ENCODE measurements at regions of chr2 and their contacts with region 1.

Region 1: DNA sequence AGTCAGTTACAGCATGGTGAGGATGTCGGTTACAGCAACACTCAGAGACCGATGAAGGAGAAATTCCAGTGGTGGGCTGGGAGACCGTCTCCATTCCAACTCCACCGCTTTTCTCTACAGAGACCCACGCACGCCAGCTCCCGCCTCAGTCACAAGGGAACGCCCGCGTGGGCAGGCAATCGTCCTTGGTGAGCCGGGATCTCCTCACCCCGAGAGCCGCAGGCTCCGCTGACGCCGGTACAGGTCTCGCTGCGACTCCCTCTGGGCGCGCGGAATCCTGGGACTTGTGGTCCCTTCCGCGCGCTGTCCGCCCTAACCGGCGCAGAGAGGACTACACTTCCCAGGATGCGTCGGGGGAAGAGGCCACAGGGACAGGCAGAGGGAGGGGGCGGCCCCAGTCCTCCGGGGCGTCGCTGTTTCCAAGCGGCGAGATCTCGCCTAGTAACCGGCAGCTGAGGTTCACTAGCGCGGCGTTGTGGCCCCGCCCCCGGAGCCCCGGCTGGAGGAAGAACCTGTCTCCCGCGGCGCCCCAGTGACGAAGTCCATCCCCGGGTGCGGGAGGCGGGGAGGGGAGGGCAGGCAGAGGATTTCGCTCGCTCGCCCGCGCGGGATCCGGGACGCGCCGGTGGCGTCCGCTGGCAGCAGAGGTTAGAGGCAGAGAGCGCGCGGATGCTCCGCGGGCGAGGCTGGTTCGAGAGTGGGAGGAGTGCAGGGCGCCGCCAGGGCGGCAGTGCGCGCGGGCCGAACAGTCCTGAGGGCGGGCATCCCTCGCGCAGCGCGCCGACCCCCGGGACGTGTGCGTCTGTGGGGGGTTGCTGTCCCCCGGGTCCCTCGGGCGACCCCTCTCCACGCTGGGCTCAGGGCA is at the start of gene EML6:
- DNase-seq: peak; percentile 95 to 99 (median 98)
- ATAC-seq: peak; percentile 95
- H3K4me3 ChIP-seq: peak within 1 kb of the TSS; percentile 70 to 72
- H3K4me3 Mint-ChIP-seq: peak within 1 kb of the TSS; percentile 93
- H3K27ac ChIP-seq: peak within 1 kb of the TSS; percentile 43 to 53
- H3K27ac Mint-ChIP-seq: peak within 1 kb of the TSS; percentile 69
- H3K4me1 ChIP-seq: peaks cover 12% of the 10 kb centered on the region
- H3K4me1 Mint-ChIP-seq: peaks cover 17% of the 10 kb centered on the region
- H3K27me3 ChIP-seq: peaks cover 0 to 11% of the 10 kb centered on the region in 2 experiments
- H3K27me3 Mint-ChIP-seq: peaks cover 27% of the 10 kb centered on the region
- CTCF ChIP-seq: no peak
- total RNA-seq, gene EML6: 0.35 to 0.81 TPM

Region 2: GRCh38 chr2:53028259-53028658 is 1695.1 kb before region 1 on chr2:
- CTCF ChIA-PET with region 1: no interaction called
- POLR2A ChIA-PET with region 1: no interaction called
- intact Hi-C with region 1: no loop called
- DNase-seq: no peak
- ATAC-seq: no peak
- H3K4me3 ChIP-seq: no peak overlapping the region
- H3K4me3 Mint-ChIP-seq: no peak overlapping the region
- H3K27ac ChIP-seq: no peak overlapping the region
- H3K27ac Mint-ChIP-seq: no peak overlapping the region
- H3K4me1 ChIP-seq: no peaks in the 10 kb centered on the region
- H3K4me1 Mint-ChIP-seq: no peaks in the 10 kb centered on the region
- H3K27me3 ChIP-seq: no peaks in the 10 kb centered on the region
- H3K27me3 Mint-ChIP-seq: no peaks in the 10 kb centered on the region
- CTCF ChIP-seq: no peak

Region 3: GRCh38 chr2:53767405-53768241 is 955.7 kb before region 1 on chr2 and contains the start of gene CHAC2:
- CTCF ChIA-PET with region 1: no interaction called
- POLR2A ChIA-PET with region 1: no interaction called
- intact Hi-C with region 1: loop called (anchors 1 to 5 kb)
- DNase-seq: peak; percentile 50 to 92 (median 84)
- ATAC-seq: peak; percentile 87
- H3K4me3 ChIP-seq: peak within 1 kb of the TSS; percentile 71 to 96
- H3K4me3 Mint-ChIP-seq: peak within 1 kb of the TSS; percentile 92
- H3K27ac ChIP-seq: peak within 1 kb of the TSS; percentile 70 to 86
- H3K27ac Mint-ChIP-seq: peak within 1 kb of the TSS; percentile 93
- H3K4me1 ChIP-seq: peaks cover 9% of the 10 kb centered on the region
- H3K4me1 Mint-ChIP-seq: peaks cover 29% of the 10 kb centered on the region
- H3K27me3 ChIP-seq: no peaks in the 10 kb centered on the region
- H3K27me3 Mint-ChIP-seq: no peaks in the 10 kb centered on the region
- CTCF ChIP-seq: peak; percentile 31
- total RNA-seq, gene CHAC2: 0.87 to 1.0 TPM

Region 4: GRCh38 chr2:54115284-54116137 is 607.9 kb before region 1 on chr2 and contains the start of gene ACYP2:
- CTCF ChIA-PET with region 1: no interaction called
- POLR2A ChIA-PET with region 1: no interaction called
- intact Hi-C with region 1: loop called (anchors 1 to 5 kb)
- DNase-seq: peak; percentile 77 to 96 (median 91)
- ATAC-seq: peak; percentile 81
- H3K4me3 ChIP-seq: peak within 1 kb of the TSS; percentile 75 to 93
- H3K4me3 Mint-ChIP-seq: peak within 1 kb of the TSS; percentile 98
- H3K27ac ChIP-seq: peak within 1 kb of the TSS; percentile 94 to 98
- H3K27ac Mint-ChIP-seq: peak within 1 kb of the TSS; percentile 100
- H3K4me1 ChIP-seq: peaks cover 5% of the 10 kb centered on the region
- H3K4me1 Mint-ChIP-seq: peaks cover 22% of the 10 kb centered on the region
- H3K27me3 ChIP-seq: no peaks in the 10 kb centered on the region
- H3K27me3 Mint-ChIP-seq: no peaks in the 10 kb centered on the region
- CTCF ChIP-seq: no peak
- total RNA-seq, gene ACYP2: 10.2 to 10.4 TPM

Region 5: DNA sequence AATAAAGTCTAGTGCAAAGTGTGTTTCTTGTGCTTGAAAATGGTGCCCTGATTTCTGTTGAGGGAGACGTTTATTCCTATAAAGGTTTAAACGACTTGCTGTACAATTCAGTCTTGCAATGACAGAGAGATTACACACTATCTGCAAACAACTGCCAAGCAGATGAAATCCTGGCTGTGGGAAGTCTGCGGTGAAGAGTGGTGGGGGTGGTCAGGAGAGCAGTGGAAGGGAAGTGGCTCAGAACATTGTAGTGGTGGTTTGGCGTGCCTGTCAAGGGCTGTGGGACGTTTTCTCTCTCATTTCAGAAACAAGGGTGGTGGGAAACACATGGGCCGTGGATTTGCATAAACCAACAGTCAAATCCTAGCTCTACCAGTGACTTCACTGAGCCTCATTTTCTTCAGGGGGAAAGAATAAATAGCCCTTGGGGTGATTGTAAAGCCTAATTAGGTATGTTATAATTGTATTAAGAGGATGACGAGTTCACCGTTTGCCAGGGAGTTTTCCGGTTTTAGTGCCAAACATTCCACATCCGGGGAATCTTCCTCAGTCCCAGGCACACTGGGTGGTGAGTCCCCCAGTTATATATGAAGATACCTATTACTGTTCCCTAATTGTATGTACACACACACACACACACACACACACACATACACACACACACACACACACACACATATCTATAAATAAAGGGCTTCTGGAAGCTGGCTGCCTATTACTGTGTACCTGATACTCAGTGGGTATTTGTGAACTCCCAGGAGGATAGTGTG is 152.3 kb before region 1 on chr2:
- CTCF ChIA-PET with region 1: no interaction called
- POLR2A ChIA-PET with region 1: no interaction called
- intact Hi-C with region 1: loop called in 1 of 2 experiments (anchors 5 kb)
- DNase-seq: peak; percentile 23 to 87 (median 69)
- ATAC-seq: peak; percentile 8
- H3K4me3 ChIP-seq: peak overlapping the region; percentile 13 to 21
- H3K4me3 Mint-ChIP-seq: peak overlapping the region; percentile 81
- H3K27ac ChIP-seq: peak overlapping the region; percentile 87 to 94
- H3K27ac Mint-ChIP-seq: peak overlapping the region; percentile 100
- H3K4me1 ChIP-seq: peaks cover 94% of the 10 kb centered on the region
- H3K4me1 Mint-ChIP-seq: peaks cover 95% of the 10 kb centered on the region
- H3K27me3 ChIP-seq: no peaks in the 10 kb centered on the region
- H3K27me3 Mint-ChIP-seq: no peaks in the 10 kb centered on the region
- CTCF ChIP-seq: no peak

Region 6: DNA sequence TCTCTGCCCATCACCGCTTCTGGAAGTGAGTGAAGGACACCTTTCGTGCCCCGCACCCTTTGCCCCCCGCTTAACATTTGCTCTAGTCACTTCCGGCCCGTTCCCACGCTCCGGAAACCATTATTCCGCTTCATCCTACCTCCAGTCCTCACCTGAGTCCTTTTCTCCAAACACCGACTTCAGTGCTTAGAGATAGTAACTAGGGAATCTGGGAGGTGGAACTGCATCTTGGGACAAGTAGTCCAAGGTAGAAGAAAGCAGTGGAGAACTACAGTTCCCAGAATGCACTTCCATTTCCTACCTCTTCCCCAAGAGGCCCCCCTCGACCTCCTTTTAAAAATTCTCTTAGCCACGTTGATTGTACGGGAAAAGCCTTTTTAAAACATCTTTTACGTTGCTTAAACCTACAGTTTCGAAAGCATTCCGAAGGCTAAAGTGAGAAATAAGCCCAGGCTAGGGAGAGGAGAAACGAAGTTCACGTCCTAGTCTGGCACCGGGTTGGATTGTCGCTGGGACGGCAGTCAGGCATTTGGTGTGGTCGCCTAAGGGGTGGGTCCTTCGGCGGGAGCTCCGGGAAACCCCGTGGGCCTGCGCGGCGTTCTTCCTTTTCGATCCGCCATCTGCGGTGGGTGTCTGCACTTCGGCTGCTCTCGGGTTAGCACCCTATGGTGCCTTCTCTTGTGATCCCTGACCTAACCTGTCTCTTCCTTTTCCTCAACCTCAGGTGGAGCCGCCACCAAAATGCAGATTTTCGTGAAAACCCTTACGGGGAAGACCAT is 508.9 kb after region 1 on chr2 and contains the starts of genes CLHC1 and RPS27A:
- CTCF ChIA-PET with region 1: no interaction called
- POLR2A ChIA-PET with region 1: no interaction called
- intact Hi-C with region 1: loop called (anchors 1 to 2 kb)
- DNase-seq: peak; percentile 89 to 97 (median 94)
- ATAC-seq: peak; percentile 87
- H3K4me3 ChIP-seq: peak within 1 kb of the TSS; percentile 97 to 99
- H3K4me3 Mint-ChIP-seq: peak within 1 kb of the TSS; percentile 93
- H3K27ac ChIP-seq: peak within 1 kb of the TSS; percentile 92 to 99
- H3K27ac Mint-ChIP-seq: peak within 1 kb of the TSS; percentile 97
- H3K4me1 ChIP-seq: peaks cover 35% of the 10 kb centered on the region
- H3K4me1 Mint-ChIP-seq: peaks cover 68% of the 10 kb centered on the region
- H3K27me3 ChIP-seq: no peaks in the 10 kb centered on the region
- H3K27me3 Mint-ChIP-seq: no peaks in the 10 kb centered on the region
- CTCF ChIP-seq: no peak
- total RNA-seq, gene CLHC1: 2.2 to 2.3 TPM
- total RNA-seq, gene RPS27A: 2,135 to 2,231 TPM

Region 7: GRCh38 chr2:55519938-55520885 is 796.8 kb after region 1 on chr2:
- CTCF ChIA-PET with region 1: no interaction called
- POLR2A ChIA-PET with region 1: interaction called, 3 read pairs
- intact Hi-C with region 1: loop called in 1 of 2 experiments (anchors 10 kb)
- DNase-seq: peak in 8 of 9 experiments; percentile 14 to 67 (median 44)
- ATAC-seq: peak; percentile 27
- H3K4me3 ChIP-seq: peak overlapping the region; percentile 85 to 87
- H3K4me3 Mint-ChIP-seq: peak overlapping the region; percentile 97
- H3K27ac ChIP-seq: peak overlapping the region; percentile 85 to 95
- H3K27ac Mint-ChIP-seq: peak overlapping the region; percentile 100
- H3K4me1 ChIP-seq: peaks cover 8% of the 10 kb centered on the region
- H3K4me1 Mint-ChIP-seq: peaks cover 20% of the 10 kb centered on the region
- H3K27me3 ChIP-seq: no peaks in the 10 kb centered on the region
- H3K27me3 Mint-ChIP-seq: no peaks in the 10 kb centered on the region
- CTCF ChIP-seq: no peak